Calu3 (cell line): ENCODE measurements at regions of chr12 and their contacts with region 1.

Region 1: DNA sequence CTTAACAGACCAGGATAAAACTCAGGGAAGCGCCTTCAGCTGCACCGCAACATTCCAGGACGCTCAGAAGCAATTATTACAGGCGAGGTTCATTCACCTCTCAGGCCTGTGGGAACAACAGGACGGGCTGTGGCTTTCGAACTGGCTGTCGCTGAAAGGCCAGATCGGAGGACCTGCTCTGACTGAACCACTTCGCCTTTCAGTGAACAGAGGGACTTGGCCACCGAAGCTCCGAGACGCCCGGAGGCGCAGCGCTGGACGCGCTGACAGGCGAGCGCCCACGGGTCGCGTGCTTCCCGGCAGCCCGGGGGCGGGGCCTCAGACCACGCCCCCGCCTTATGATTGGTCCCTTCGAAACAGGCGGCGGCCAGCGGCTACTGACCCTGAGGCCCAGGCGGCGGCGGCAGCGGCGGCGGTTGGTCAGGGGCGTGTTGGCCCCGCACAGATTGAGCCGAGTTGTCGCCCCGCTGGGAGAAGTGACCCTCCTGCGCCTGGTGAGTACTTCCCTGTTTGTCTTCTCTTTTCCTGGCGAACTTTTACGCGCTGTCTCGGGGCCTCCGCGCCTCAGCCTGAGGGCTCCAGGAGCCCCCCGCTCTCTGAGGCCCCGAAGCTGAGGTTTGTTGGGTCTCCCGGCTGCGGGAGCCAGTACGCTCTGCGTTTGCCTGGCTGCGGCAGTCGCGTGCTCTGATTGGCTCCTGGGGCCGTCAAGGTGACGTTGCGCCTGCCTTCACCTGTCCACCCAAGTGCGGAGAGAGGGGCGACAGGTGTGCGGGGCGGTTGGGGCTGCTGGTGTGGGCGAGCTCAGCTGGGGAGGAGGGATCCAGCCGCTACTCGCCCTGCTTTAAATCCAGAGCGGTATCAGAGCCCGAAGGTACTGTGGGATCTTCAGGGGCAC is at the start of gene GAS2L3:
- DNase-seq: peak; percentile 96
- H3K4me3 Mint-ChIP-seq: peak within 1 kb of the TSS; percentile 97
- H3K27ac Mint-ChIP-seq: peak within 1 kb of the TSS; percentile 92
- H3K4me1 Mint-ChIP-seq: peaks cover 17% of the 10 kb centered on the region
- H3K27me3 Mint-ChIP-seq: no peaks in the 10 kb centered on the region
- CTCF ChIP-seq: no peak
- total RNA-seq, gene GAS2L3: 116 and 132 TPM in 2 replicates

Region 2: GRCh38 chr12:100593490-100593889 is 20.0 kb after region 1 on chr12:
- CTCF ChIA-PET with region 1: no interaction called
- intact Hi-C with region 1: loop called (anchors 1 kb)
- DNase-seq: no peak
- H3K4me3 Mint-ChIP-seq: peak overlapping the region; percentile 45
- H3K27ac Mint-ChIP-seq: peak overlapping the region; percentile 87
- H3K4me1 Mint-ChIP-seq: peaks cover 41% of the 10 kb centered on the region
- H3K27me3 Mint-ChIP-seq: no peaks in the 10 kb centered on the region
- CTCF ChIP-seq: no peak

Region 3: GRCh38 chr12:100610666-100611430 is 37.3 kb after region 1 on chr12:
- CTCF ChIA-PET with region 1: no interaction called
- intact Hi-C with region 1: loop called (anchors 5 kb)
- DNase-seq: no peak
- H3K4me3 Mint-ChIP-seq: no peak overlapping the region
- H3K27ac Mint-ChIP-seq: peak overlapping the region; percentile 17
- H3K4me1 Mint-ChIP-seq: peaks cover 42% of the 10 kb centered on the region
- H3K27me3 Mint-ChIP-seq: no peaks in the 10 kb centered on the region
- CTCF ChIP-seq: no peak

Region 4: GRCh38 chr12:100632445-100632892 is 58.9 kb after region 1 on chr12:
- CTCF ChIA-PET with region 1: no interaction called
- intact Hi-C with region 1: loop called (anchors 5 kb)
- DNase-seq: peak; percentile 43
- H3K4me3 Mint-ChIP-seq: peak overlapping the region; percentile 62
- H3K27ac Mint-ChIP-seq: peak overlapping the region; percentile 70
- H3K4me1 Mint-ChIP-seq: peaks cover 41% of the 10 kb centered on the region
- H3K27me3 Mint-ChIP-seq: no peaks in the 10 kb centered on the region
- CTCF ChIP-seq: no peak

Region 5: DNA sequence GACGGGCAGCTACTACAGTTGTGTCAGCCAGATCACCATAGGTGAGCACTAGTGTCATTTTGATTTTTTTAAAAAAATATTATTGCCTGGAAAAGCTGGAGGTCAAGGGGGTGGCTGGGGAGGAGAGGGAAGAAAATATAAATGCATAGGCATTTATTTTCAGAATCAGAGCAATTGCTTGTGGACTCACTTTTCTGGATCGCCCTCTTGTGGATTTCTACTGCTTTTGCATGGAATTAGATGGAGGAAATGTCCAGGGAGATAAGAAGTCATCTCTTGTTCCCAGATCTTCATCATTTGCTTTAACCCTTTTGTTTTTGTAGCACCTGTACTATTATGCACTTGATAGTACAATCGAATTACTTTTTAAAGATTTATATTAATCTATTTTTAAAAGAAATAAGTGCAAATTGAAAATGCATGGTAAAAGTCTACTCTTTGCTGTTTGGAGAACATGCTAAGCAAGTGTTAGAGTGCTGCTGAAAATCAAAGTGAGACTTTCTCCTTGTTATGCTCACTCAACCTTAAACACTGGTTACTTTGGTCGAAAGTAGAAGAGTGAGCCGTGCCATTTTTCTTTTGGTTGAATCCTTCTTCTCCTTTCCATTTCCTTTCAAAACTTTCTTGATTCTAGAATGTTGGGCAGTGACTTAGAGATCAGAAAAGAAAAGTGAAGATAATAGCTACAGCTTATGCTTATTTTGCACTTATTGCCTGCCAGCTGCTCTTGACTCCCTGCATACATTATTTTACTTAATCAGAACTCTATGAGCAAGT is 160.5 kb after region 1 on chr12:
- CTCF ChIA-PET with region 1: no interaction called
- intact Hi-C with region 1: loop called (anchors 5 kb)
- DNase-seq: peak; percentile 25
- H3K4me3 Mint-ChIP-seq: no peak overlapping the region
- H3K27ac Mint-ChIP-seq: no peak overlapping the region
- H3K4me1 Mint-ChIP-seq: no peaks in the 10 kb centered on the region
- H3K27me3 Mint-ChIP-seq: no peaks in the 10 kb centered on the region
- CTCF ChIP-seq: peak; percentile 24

Region 6: DNA sequence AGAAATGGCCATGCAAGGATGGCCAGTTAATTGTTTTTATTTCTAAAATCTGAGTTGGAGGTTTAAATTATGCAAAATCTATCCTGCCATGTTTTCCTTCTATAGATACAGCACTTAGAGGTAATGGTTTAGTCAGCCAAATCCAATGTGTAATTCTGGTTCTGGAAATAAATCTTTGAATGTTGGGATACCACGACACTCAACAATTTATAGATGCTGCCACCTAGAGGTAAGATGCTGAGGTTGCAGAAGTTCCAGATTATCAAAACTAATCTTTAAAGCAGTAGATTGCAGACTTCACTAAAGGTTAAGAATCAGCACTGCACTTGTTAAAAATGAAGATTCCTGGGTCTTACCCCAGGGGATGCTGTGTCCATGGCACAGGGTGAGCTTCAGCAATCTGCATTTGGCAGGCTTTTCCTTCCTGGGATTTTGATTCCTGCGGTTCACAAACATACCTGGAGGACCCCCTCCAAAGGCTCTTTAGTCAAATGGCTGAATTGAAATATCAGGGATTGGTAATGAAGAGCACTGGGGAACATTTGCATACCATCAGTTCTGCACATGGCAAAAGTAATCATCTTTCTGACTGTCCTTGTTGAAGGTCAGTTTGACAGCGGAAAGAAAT is 167.7 kb after region 1 on chr12:
- CTCF ChIA-PET with region 1: no interaction called
- intact Hi-C with region 1: loop called (anchors 5 kb)
- DNase-seq: peak; percentile 27
- H3K4me3 Mint-ChIP-seq: no peak overlapping the region
- H3K27ac Mint-ChIP-seq: no peak overlapping the region
- H3K4me1 Mint-ChIP-seq: no peaks in the 10 kb centered on the region
- H3K27me3 Mint-ChIP-seq: no peaks in the 10 kb centered on the region
- CTCF ChIP-seq: peak; percentile 35

Region 7: GRCh38 chr12:100851637-100852036 is 278.1 kb after region 1 on chr12:
- CTCF ChIA-PET with region 1: no interaction called
- intact Hi-C with region 1: no loop called
- DNase-seq: no peak
- H3K4me3 Mint-ChIP-seq: no peak overlapping the region
- H3K27ac Mint-ChIP-seq: no peak overlapping the region
- H3K4me1 Mint-ChIP-seq: no peaks in the 10 kb centered on the region
- H3K27me3 Mint-ChIP-seq: no peaks in the 10 kb centered on the region
- CTCF ChIP-seq: no peak

Region 8: DNA sequence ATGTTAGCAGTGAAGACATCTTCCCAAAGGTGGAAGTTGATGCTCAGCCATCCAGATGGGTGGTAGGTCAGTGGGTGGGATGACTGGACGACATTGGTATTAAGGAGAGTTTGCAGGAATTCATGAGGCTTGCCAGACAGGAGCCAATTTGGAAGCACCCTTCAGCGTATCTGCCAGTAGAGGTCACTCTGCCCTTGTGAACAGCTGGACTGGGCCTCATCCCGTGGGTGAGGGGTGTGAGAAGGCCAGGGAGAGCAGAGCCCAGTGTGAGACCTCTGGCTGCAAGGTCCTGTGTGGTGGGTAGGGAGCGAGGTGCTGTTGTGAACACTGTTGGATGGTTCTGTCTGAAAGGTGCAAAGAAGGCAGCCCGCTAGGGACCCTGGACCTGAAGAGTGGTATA is 598.8 kb after region 1 on chr12:
- CTCF ChIA-PET with region 1: no interaction called
- intact Hi-C with region 1: no loop called
- DNase-seq: no peak
- H3K4me3 Mint-ChIP-seq: no peak overlapping the region
- H3K27ac Mint-ChIP-seq: no peak overlapping the region
- H3K4me1 Mint-ChIP-seq: no peaks in the 10 kb centered on the region
- H3K27me3 Mint-ChIP-seq: no peaks in the 10 kb centered on the region
- CTCF ChIP-seq: no peak